Left lung (tissue), 14 donors: ENCODE measurements at regions of chr15 and their contacts with region 1.

Region 1: DNA sequence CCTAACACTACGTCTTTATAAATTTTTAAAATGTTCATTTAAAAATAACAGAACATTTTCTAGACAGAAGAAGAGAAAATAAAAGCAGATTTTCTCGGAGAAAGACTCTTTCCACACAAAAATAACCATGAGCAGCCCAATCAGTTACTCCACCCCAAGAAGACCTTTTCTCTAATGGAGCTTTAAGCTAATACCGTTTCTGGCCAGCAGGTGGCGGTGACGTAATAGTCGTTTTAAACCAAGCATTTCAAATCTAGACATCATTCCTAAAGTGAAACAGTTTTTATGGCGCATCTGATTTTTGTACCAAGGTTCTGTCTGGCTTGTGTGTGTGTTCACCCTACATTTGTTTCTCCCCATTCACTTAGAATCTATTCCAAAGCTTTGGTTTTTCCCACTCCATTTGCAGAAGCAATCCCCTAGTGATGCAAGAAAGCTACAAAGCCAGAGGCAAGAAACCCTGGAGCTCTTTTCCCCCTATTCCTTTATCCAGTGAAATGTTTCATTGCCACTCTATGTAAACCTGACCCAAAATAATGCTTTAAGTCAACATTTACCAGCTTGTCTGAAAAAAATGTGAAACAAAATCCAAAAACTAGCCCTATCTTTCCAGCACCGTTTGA is 336.7 kb upstream of the IGF1R start:
- DNase-seq: peak in 3 of 4 donors; percentile 61 to 77 (median 65)
- ATAC-seq: peak; percentile 79
- H3K4me3 ChIP-seq: no peak overlapping the region
- H3K27ac ChIP-seq: no peak overlapping the region
- H3K4me1 ChIP-seq: no peaks in the 10 kb centered on the region
- H3K27me3 ChIP-seq: peaks cover 5% of the 10 kb centered on the region in 2 donors
- CTCF ChIP-seq: peak; percentile 75 to 84

Region 2: DNA sequence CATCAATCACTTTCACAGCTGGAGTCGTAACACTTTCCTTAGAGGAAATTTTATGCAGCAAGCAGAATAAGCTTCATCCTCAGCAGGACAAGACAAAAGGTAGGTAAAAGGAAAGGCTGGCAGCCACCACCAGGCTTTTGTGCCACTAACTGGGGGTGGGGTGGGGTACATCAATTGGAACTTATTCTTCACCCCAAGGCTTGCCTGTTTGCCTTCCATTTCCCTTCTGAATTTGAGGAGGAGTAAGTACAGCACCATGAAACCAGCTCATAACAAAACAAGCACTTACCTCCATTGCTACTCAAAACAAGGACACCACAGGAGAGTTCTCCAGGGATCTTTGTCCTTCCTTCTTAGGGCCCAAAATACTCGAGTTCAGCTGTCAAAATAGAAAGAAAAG is 54.4 kb before region 1 on chr15:
- intact Hi-C with region 1: no loop called
- DNase-seq: no peak
- ATAC-seq: no peak
- H3K4me3 ChIP-seq: no peak overlapping the region
- H3K27ac ChIP-seq: no peak overlapping the region
- H3K4me1 ChIP-seq: no peaks in the 10 kb centered on the region
- H3K27me3 ChIP-seq: peaks cover 0 to 10% of the 10 kb centered on the region in 2 donors
- CTCF ChIP-seq: no peak

Region 3: GRCh38 chr15:98375513-98376340 is 64.0 kb after region 1 on chr15:
- intact Hi-C with region 1: no loop called
- DNase-seq: no peak
- ATAC-seq: no peak
- H3K4me3 ChIP-seq: no peak overlapping the region
- H3K27ac ChIP-seq: no peak overlapping the region
- H3K4me1 ChIP-seq: no peaks in the 10 kb centered on the region
- H3K27me3 ChIP-seq: no peaks in the 10 kb centered on the region
- CTCF ChIP-seq: no peak

Region 4: DNA sequence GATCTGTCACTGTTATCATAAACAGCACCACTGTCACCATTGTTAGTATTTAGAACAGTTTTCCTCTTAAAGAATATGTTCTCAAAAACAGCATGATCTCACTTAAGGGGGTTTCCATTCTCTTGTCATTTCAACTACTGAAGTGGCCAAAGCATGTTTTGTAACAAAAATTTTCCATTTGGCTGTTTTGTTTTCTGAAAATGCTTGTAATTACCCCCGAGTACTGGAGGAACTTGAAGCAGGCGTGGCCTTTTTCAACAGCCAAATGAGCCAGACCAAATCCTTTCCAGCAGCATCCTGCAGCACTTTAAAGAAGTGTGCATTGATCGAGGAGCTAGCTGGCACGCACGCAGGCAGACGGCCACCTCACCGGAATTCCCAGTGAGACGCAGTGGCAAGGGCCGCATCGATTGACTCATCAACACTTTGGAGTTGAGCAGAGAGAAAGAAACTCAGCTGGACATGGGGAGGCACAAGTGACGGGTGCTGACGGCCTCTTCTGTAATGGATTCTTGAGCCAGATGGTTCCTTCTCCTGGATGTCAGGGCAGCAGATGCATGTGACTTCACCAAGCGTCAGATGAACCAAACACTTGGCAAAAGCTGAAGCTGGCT is 102.4 kb after region 1 on chr15:
- intact Hi-C with region 1: loop called in 1 of 2 experiments (anchors 10 kb)
- DNase-seq: no peak
- ATAC-seq: no peak
- H3K4me3 ChIP-seq: no peak overlapping the region
- H3K27ac ChIP-seq: no peak overlapping the region
- H3K4me1 ChIP-seq: no peaks in the 10 kb centered on the region
- H3K27me3 ChIP-seq: peaks cover 0 to 3% of the 10 kb centered on the region in 2 donors
- CTCF ChIP-seq: no peak

Region 5: GRCh38 chr15:98421419-98422129 is 109.9 kb after region 1 on chr15:
- intact Hi-C with region 1: loop called (anchors 5 to 10 kb)
- DNase-seq: peak; percentile 47 to 92 (median 58)
- ATAC-seq: peak; percentile 91
- H3K4me3 ChIP-seq: peak overlapping the region in 1 of 2 donors; percentile 7
- H3K27ac ChIP-seq: no peak overlapping the region
- H3K4me1 ChIP-seq: peaks cover 8 to 9% of the 10 kb centered on the region in 2 donors
- H3K27me3 ChIP-seq: peaks cover 17 to 68% of the 10 kb centered on the region in 2 donors
- CTCF ChIP-seq: peak; percentile 98 to 99

Region 6: DNA sequence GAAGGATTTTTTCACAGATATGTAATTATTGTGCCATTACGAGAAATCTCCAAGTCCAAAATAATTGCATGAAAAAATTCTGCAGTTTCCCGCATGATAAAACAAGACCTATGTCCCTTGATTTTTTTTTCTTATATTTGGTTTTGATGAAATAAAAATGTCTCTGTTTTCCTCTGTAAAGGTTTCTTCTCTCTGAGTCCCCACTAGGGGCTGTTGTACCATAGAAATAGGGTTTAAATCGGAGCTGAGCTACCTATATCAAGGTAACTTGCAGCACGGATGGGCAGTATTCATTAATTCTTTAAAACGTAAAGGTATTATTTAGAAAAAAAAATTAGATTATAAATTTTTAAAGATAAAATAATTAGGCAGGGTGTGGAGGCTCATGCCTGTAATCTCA is 270.0 kb after region 1 on chr15:
- intact Hi-C with region 1: no loop called
- DNase-seq: no peak
- ATAC-seq: no peak
- H3K4me3 ChIP-seq: no peak overlapping the region
- H3K27ac ChIP-seq: no peak overlapping the region
- H3K4me1 ChIP-seq: no peaks in the 10 kb centered on the region
- H3K27me3 ChIP-seq: peaks cover 47 to 81% of the 10 kb centered on the region in 2 donors
- CTCF ChIP-seq: no peak

Region 7: GRCh38 chr15:98599909-98600691 is 288.4 kb after region 1 on chr15:
- intact Hi-C with region 1: no loop called
- DNase-seq: peak; percentile 54 to 80 (median 72)
- ATAC-seq: peak; percentile 95
- H3K4me3 ChIP-seq: peak overlapping the region; percentile 19 to 40
- H3K27ac ChIP-seq: peak overlapping the region; percentile 8 to 14
- H3K4me1 ChIP-seq: peaks cover 0 to 11% of the 10 kb centered on the region in 2 donors
- H3K27me3 ChIP-seq: no peaks in the 10 kb centered on the region
- CTCF ChIP-seq: no peak